Mammary epithelial cell (primary cell): ENCODE measurements at regions of chr12 and their contacts with region 1.

Region 1: GRCh38 chr12:113184900-113185773 is at the starts of genes DDX54 and RITA1:
- DNase-seq: peak; percentile 89
- H3K4me3 ChIP-seq: peak within 1 kb of the TSS; percentile 74 to 94 (median 93)
- H3K27ac ChIP-seq: peak within 1 kb of the TSS; percentile 91
- H3K4me1 ChIP-seq: peaks cover 12% of the 10 kb centered on the region
- H3K27me3 ChIP-seq: no peaks in the 10 kb centered on the region
- CTCF ChIP-seq: no peak
- total RNA-seq, gene DDX54: 49.3 to 92.9 TPM
- total RNA-seq, gene RITA1: 21.0 to 21.5 TPM

Region 2: GRCh38 chr12:113221181-113221997 is 36.3 kb after region 1 on chr12 and contains the start of gene TPCN1:
- CTCF ChIA-PET with region 1: no interaction called
- dilution Hi-C with region 1: loop called (anchors 5 kb)
- in situ Hi-C with region 1: no loop called
- intact Hi-C with region 1: loop called (anchors 5 kb)
- DNase-seq: peak; percentile 100
- H3K4me3 ChIP-seq: peak within 1 kb of the TSS; percentile 61 to 85 (median 83)
- H3K27ac ChIP-seq: peak within 1 kb of the TSS; percentile 76
- H3K4me1 ChIP-seq: peaks cover 16% of the 10 kb centered on the region
- H3K27me3 ChIP-seq: no peaks in the 10 kb centered on the region
- CTCF ChIP-seq: no peak
- total RNA-seq, gene TPCN1: 10.7 to 62.3 TPM